PC-3 (cell line): ENCODE measurements at regions of chr9 and their contacts with region 1.

Region 1: DNA sequence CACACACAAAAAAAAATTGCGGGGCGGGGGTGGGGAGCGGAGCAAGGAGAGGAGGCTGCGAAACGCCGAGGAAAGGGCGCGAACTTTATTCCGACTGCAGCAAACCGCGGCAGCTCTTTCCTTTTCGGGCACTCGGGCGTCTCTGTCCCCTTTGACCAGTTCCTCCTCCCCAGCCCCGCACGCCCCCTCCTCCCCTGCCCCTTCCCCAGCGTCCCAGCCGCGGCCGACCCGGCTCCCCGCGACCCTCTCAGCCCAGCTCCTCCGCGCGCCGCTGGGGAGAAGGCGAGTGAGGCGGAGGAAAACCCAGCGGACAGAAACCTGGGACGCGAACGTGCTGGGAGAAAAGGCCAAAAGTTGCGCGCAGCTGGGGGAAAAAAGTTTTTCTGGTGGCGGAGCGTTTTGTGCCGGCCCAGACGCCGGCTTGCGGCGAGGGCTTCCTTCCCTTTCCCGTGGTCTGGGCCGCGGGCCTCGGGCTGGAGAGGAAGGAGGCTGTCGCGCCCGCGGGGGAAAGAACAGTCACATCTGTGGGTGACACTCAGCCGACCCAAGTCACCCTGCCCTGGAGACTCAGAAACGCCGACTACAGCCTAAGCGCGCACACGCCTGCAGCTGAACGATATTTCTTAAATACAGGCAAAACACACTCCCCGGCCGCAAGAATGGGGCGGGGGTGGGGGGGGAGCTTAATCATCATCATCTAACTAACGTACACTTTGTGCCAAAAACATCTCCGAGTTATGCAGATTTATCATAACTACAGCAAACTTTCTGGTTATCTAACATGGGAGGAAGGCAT is 1.1 kb upstream of the BNC2 start:
- DNase-seq: peak; percentile 71
- ATAC-seq: peak; percentile 41
- H3K4me3 ChIP-seq: peak overlapping the region; percentile 89
- H3K27ac ChIP-seq: peak overlapping the region; percentile 64
- H3K4me1 ChIP-seq: peaks cover 33% of the 10 kb centered on the region
- H3K27me3 ChIP-seq: no peaks in the 10 kb centered on the region
- CTCF ChIP-seq: no peak

Region 2: GRCh38 chr9:16626577-16627131 is 244.9 kb before region 1 on chr9:
- CTCF ChIA-PET with region 1: no interaction called
- POLR2A ChIA-PET with region 1: no interaction called
- intact Hi-C with region 1: loop called (anchors 5 kb)
- DNase-seq: peak; percentile 78
- ATAC-seq: peak; percentile 99
- H3K4me3 ChIP-seq: peak overlapping the region; percentile 56
- H3K27ac ChIP-seq: peak overlapping the region; percentile 56
- H3K4me1 ChIP-seq: peaks cover 23% of the 10 kb centered on the region
- H3K27me3 ChIP-seq: no peaks in the 10 kb centered on the region
- CTCF ChIP-seq: no peak

Region 3: GRCh38 chr9:16715404-16715803 is 156.2 kb before region 1 on chr9:
- CTCF ChIA-PET with region 1: no interaction called
- POLR2A ChIA-PET with region 1: no interaction called
- intact Hi-C with region 1: no loop called
- DNase-seq: no peak
- ATAC-seq: no peak
- H3K4me3 ChIP-seq: no peak overlapping the region
- H3K27ac ChIP-seq: no peak overlapping the region
- H3K4me1 ChIP-seq: peaks cover 11% of the 10 kb centered on the region; the same call in 1 of the 2 replicates
- H3K27me3 ChIP-seq: no peaks in the 10 kb centered on the region
- CTCF ChIP-seq: no peak

Region 4: DNA sequence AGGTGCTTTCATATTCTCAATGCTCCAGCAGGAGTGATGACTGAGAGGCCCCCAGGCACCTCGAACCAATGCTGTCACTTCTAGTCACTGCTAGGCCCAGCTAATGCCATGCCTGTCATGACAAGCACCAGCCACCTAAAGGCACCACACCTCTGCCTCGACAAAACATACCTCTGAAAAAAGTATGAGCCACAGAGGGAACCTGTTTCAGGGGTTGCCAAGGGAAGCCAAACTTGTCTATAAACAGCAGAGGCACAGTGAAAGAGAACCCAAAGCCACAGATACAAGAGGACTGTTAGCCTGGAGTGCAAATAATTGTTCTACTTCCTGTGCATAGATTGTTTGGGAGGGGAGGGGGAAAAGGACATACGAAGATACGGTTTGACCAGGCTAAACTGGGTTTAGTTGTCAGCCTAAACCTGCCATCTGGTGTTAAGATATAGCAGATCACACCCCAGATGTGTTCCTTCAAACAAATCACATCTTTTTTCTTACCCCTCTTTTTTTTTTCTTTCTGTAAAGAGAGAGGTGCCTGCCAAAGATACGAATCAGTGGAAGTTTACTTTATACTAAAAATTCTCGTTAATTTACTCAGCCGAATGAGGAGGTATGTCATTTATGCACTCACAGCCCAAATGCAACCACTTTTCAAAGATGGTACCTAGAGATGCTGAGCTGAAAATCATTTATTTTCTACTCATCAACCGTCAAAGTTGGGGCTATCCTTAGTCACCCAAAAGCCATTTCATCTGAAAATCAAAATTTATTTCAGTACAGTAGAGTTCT is 46.8 kb before region 1 on chr9:
- CTCF ChIA-PET with region 1: no interaction called
- POLR2A ChIA-PET with region 1: no interaction called
- intact Hi-C with region 1: loop called (anchors 2 kb)
- DNase-seq: peak; percentile 54
- ATAC-seq: peak; percentile 53
- H3K4me3 ChIP-seq: no peak overlapping the region
- H3K27ac ChIP-seq: 0 out of 2 replicates have a peak overlapping the region, but pooled peaks have one; percentile 9
- H3K4me1 ChIP-seq: peaks cover 33% of the 10 kb centered on the region
- H3K27me3 ChIP-seq: no peaks in the 10 kb centered on the region
- CTCF ChIP-seq: peak; percentile 36; the same call in 1 of the 2 replicates

Region 5: GRCh38 chr9:16921855-16922254 is 50.3 kb after region 1 on chr9:
- CTCF ChIA-PET with region 1: no interaction called
- POLR2A ChIA-PET with region 1: no interaction called
- intact Hi-C with region 1: loop called (anchors 5 kb)
- DNase-seq: peak; percentile 77
- ATAC-seq: peak; percentile 95
- H3K4me3 ChIP-seq: no peak overlapping the region
- H3K27ac ChIP-seq: peak overlapping the region; percentile 52
- H3K4me1 ChIP-seq: peaks cover 21% of the 10 kb centered on the region
- H3K27me3 ChIP-seq: no peaks in the 10 kb centered on the region
- CTCF ChIP-seq: peak; percentile 59

Region 6: DNA sequence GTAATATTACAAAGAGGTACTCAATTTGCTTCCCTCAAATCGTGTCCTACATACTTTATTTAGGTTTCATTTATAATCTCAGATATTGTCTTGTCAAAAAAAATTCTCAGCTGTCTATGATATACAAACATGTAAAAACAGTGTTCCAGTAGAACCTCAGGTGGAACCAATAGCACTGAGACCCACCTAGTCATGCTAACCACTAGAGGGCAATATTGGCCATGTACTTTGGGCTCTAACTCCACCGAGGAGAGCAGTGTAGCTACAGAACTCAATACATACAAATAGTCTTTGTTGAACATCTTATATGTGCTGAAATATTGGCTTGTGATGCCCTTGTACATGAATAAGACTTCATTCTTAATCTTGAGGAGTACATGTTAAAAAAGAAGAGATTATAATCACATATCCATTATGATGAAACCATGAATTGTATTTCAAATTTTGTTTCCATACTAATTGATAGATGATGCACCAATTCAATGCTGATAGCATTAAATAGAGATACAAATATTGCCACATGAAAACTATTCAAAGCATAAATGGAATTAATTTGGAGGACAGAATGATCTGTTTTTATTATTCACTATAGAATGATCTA is 192.1 kb after region 1 on chr9:
- CTCF ChIA-PET with region 1: no interaction called
- POLR2A ChIA-PET with region 1: no interaction called
- intact Hi-C with region 1: loop called (anchors 10 kb)
- DNase-seq: peak; percentile 70
- ATAC-seq: peak; percentile 76
- H3K4me3 ChIP-seq: no peak overlapping the region
- H3K27ac ChIP-seq: no peak overlapping the region
- H3K4me1 ChIP-seq: peaks cover 15% of the 10 kb centered on the region
- H3K27me3 ChIP-seq: no peaks in the 10 kb centered on the region
- CTCF ChIP-seq: peak; percentile 84